Activated naive CD4-positive, alpha-beta T cell treated with anti-CD3 and anti-CD28 coated beads for 36 hours (primary cell): ENCODE measurements at regions of chr1 and their contacts with region 1.

Region 1: DNA sequence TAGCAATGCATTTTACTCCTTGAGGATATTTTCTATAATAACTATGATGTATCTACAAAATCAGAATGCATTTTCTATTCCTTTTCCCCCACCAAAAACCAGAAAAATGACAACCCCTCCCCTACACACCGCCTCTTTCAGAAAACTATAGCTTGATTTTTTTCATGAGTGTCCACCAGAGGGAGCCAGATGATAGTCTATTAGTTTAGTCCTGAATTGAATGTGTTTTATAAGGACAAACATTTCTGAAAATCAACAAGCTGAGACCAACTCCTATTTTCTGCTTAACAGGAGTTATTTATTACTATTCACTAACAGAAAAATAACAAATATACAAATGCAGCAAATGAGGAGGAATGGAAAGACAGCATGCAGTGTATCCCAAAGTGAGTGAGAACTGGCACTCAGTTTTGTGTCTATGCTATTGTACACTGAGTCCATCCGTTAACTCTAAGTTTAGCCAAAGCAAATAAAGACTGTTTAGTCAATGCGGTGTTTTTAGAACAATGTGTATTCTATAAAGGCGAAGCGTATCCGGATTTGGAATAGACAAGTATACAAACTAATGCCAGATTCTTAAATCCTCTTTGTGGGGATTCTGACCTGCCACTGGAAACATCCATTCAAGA is 182.6 kb downstream of the VAV3 start:
- DNase-seq: peak; percentile 59
- H3K4me3 Mint-ChIP-seq: no peak overlapping the region
- H3K27ac Mint-ChIP-seq: no peak overlapping the region
- H3K4me1 Mint-ChIP-seq: peaks cover 23% of the 10 kb centered on the region
- H3K27me3 Mint-ChIP-seq: no peaks in the 10 kb centered on the region

Region 2: GRCh38 chr1:107820805-107821204 is 38.5 kb after region 1 on chr1:
- CTCF ChIA-PET with region 1: interaction called, 6 read pairs
- intact Hi-C with region 1: loop called (anchors 1 kb)
- DNase-seq: no peak
- H3K4me3 Mint-ChIP-seq: no peak overlapping the region
- H3K27ac Mint-ChIP-seq: peak overlapping the region; percentile 83
- H3K4me1 Mint-ChIP-seq: peaks cover 30% of the 10 kb centered on the region
- H3K27me3 Mint-ChIP-seq: no peaks in the 10 kb centered on the region

Region 3: DNA sequence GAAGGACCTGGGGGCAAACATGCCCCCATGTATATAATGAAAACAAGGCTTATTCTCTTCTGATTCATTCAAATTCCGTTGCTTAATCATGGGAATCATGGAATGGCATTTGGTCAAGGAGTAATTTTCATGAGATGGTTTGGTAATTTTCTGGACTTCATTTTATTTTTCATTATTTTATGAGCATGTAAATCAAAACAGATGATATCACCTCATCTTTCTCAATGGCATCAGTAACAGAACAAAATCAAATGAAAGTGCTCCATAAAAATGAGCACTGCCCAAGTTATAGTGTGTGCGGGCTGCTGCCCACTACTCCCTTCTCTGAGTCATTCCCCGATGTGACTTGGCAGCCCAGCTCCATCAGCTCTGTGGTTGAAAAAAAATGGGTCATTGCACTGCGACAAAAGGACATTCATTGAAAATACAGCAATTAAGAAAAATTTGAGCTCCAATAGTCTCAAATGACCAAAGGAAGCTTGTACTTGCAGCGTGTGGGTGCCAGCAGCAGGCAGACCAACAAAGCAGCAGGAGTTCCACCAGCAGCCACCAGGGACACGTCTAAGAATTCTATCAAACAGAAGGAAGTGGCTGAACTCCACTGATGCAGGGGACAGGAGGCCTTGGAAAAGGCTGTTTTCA is 267.0 kb after region 1 on chr1:
- CTCF ChIA-PET with region 1: interaction called, 6 read pairs
- intact Hi-C with region 1: loop called (anchors 10 kb)
- DNase-seq: peak; percentile 51
- H3K4me3 Mint-ChIP-seq: no peak overlapping the region
- H3K27ac Mint-ChIP-seq: no peak overlapping the region
- H3K4me1 Mint-ChIP-seq: peaks cover 35% of the 10 kb centered on the region
- H3K27me3 Mint-ChIP-seq: no peaks in the 10 kb centered on the region

Region 4: GRCh38 chr1:108125312-108126138 is 343.2 kb after region 1 on chr1:
- CTCF ChIA-PET with region 1: interaction called, 255 read pairs
- intact Hi-C with region 1: loop called (anchors 1 kb)
- DNase-seq: peak; percentile 80
- H3K4me3 Mint-ChIP-seq: no peak overlapping the region
- H3K27ac Mint-ChIP-seq: no peak overlapping the region
- H3K4me1 Mint-ChIP-seq: peaks cover 3% of the 10 kb centered on the region
- H3K27me3 Mint-ChIP-seq: no peaks in the 10 kb centered on the region